Endothelial cell of umbilical vein (primary cell): ENCODE measurements at regions of chr1 and their contacts with region 1.

Region 1: DNA sequence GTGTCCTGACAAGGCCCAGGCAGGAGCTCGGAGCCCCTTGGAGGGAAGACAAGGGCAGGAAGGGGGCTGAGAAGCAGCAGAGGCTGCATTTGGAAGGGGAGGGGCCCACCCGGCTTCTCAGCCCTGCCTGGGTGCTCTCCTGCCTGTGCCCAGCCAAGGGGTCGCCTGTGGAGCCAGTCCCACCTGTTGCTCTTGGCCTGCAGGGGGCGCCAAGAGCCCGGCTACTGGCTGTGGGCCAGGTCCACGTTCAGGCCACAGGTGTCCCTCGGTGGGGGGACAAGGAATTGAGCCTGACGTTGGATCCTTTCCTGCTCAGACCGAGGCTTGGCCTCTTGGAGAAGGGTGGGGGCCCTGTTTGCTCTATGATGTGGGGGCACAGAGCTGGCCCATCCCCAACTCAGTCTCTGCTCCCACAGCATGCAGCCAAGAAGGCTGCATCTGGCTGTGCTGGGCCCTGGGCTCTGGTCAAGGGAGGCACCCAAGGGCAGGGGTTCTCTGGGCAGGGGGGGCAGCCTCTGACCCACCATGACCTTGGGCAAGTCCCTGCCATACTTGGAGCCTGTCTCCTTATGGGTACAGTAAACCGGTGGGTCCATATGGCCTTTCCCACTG is 10.9 kb downstream of the WNT4 start:
- DNase-seq: peak; percentile 37
- H3K4me3 ChIP-seq: no peak overlapping the region
- H3K27ac ChIP-seq: no peak overlapping the region
- H3K4me1 ChIP-seq: peaks cover 13% of the 10 kb centered on the region
- H3K27me3 ChIP-seq: no peaks in the 10 kb centered on the region
- CTCF ChIP-seq: peak; percentile 87 to 94
- POLR2A ChIP-seq: no peak

Region 2: DNA sequence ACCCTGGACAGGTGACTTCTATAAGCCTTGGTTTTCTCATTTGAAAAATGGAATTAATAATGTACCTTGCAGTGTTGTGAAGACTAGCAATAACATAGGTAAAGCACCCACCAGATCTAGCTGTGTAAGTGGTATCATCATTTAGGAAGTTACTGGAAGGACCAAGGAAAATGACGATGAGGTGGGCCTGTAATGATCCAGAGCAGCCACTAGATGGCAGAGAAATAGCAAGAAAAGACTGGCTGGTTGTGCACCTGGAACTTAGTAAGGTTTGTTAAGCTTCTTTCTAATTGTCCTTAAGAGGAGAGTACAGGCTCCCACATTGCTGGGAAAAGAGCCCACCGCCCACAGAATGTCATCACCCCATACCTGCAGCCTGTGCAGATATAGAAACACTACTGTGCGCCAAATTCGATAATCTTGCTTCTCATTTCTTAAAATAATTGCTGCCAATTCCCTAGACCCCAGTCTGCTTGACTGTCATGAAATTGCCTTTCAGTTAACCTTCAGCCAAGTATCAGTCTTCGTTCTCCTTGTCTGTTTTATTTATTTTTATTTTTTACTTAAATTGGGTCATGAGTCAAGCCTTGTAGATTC is 26.3 kb before region 1 on chr1:
- CTCF ChIA-PET with region 1: interaction called, 10 read pairs
- POLR2A ChIA-PET with region 1: no interaction called
- dilution Hi-C with region 1: no loop called
- intact Hi-C with region 1: loop called (anchors 1 kb)
- DNase-seq: peak; percentile 62
- H3K4me3 ChIP-seq: no peak overlapping the region
- H3K27ac ChIP-seq: no peak overlapping the region
- H3K4me1 ChIP-seq: peaks cover 14% of the 10 kb centered on the region
- H3K27me3 ChIP-seq: no peaks in the 10 kb centered on the region
- CTCF ChIP-seq: peak; percentile 66 to 76
- POLR2A ChIP-seq: no peak

Region 3: GRCh38 chr1:22114083-22115012 is 17.6 kb before region 1 on chr1:
- CTCF ChIA-PET with region 1: interaction called, 22 read pairs
- POLR2A ChIA-PET with region 1: no interaction called
- dilution Hi-C with region 1: no loop called
- intact Hi-C with region 1: no loop called
- DNase-seq: peak; percentile 93
- H3K4me3 ChIP-seq: no peak overlapping the region
- H3K27ac ChIP-seq: peak overlapping the region; percentile 59
- H3K4me1 ChIP-seq: peaks cover 40% of the 10 kb centered on the region
- H3K27me3 ChIP-seq: no peaks in the 10 kb centered on the region
- CTCF ChIP-seq: no peak
- POLR2A ChIP-seq: peak; percentile 48

Region 4: DNA sequence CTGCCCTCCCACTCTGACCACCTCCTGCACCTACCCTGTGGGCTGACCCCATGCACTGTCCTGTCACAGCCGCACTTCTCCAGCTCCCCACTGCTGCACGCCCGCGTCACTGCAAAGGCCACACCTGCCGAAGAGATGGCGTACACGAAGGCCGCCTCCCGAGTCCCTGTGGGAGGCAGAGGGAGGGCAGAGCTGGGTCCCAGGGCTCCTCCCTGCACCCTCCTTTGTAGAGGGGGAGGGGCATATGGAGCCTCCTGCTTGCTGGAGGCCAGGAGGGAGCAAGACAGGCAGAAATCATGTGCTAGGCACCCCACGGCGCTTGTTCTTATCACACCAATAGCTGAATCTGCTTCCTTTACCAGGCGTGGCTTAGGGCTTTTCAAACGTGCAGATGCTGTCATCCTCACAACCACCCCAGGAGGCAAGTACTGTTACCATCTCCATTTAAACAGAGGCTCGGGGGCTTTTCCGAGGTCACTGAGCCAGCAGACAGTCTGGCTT is 10.5 kb before region 1 on chr1:
- CTCF ChIA-PET with region 1: interaction called, 24 read pairs
- POLR2A ChIA-PET with region 1: no interaction called
- dilution Hi-C with region 1: no loop called
- intact Hi-C with region 1: no loop called
- DNase-seq: no peak
- H3K4me3 ChIP-seq: no peak overlapping the region
- H3K27ac ChIP-seq: no peak overlapping the region
- H3K4me1 ChIP-seq: no peaks in the 10 kb centered on the region
- H3K27me3 ChIP-seq: no peaks in the 10 kb centered on the region
- CTCF ChIP-seq: no peak
- POLR2A ChIP-seq: no peak

Region 5: GRCh38 chr1:22143065-22144036 is 11.4 kb after region 1 on chr1 and contains the start of gene WNT4:
- CTCF ChIA-PET with region 1: interaction called, 54 read pairs
- POLR2A ChIA-PET with region 1: no interaction called
- dilution Hi-C with region 1: no loop called
- intact Hi-C with region 1: no loop called
- DNase-seq: no peak
- H3K4me3 ChIP-seq: peak within 1 kb of the TSS in 1 of 3 experiments; percentile 12
- H3K27ac ChIP-seq: no peak within 1 kb of the TSS
- H3K4me1 ChIP-seq: peaks cover 4% of the 10 kb centered on the region
- H3K27me3 ChIP-seq: peaks cover 28 to 44% of the 10 kb centered on the region in 2 experiments
- CTCF ChIP-seq: peak in 1 of 2 donors; percentile 15
- POLR2A ChIP-seq: no peak
- total RNA-seq, gene WNT4: not detected in 2 replicates

Region 6: DNA sequence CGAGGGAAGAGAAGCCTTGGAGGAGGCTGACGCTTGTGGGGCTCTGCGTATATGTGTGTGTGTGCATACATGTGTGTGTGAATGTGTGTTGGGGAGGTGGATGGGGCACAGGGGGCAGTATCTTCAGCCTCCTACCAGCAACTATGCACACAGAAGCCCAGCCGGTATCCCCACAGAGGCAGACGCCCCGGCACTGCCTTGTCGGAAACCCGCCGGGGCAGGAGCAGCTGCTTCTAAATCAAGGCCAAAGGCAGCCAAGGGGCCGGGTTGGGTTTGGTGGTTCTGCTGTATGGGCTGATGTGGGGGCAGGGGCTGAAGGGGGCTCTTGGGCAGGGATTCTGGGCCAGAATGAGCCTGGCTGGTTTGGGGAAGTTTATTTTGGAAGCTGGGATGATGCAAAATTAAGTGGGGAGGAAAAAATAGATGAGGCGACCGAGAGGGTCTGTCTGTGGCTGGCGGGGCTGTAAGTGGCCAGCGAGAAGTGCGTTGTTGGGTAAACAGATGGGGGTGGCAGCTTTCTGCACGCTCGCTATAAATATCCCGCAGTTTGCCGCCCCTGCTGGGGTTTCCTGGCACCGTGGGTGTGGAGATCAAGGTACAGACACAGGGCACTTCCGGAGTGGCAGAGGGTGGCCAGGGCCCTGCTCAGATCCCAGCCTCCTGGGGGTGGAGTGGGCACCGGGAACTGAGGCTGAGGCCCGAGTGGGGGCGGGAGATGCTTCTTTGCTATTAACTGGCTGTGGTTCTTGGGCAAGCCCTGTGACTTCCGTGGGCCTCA is 21.9 kb after region 1 on chr1:
- CTCF ChIA-PET with region 1: no interaction called
- POLR2A ChIA-PET with region 1: no interaction called
- dilution Hi-C with region 1: no loop called
- intact Hi-C with region 1: no loop called
- DNase-seq: no peak
- H3K4me3 ChIP-seq: no peak overlapping the region
- H3K27ac ChIP-seq: no peak overlapping the region
- H3K4me1 ChIP-seq: no peaks in the 10 kb centered on the region
- H3K27me3 ChIP-seq: peaks cover 0 to 7% of the 10 kb centered on the region in 2 experiments
- CTCF ChIP-seq: no peak
- POLR2A ChIP-seq: no peak

Region 7: GRCh38 chr1:22275721-22276395 is 143.9 kb after region 1 on chr1:
- CTCF ChIA-PET with region 1: interaction called, 15 read pairs
- POLR2A ChIA-PET with region 1: no interaction called
- dilution Hi-C with region 1: no loop called
- intact Hi-C with region 1: loop called (anchors 2 kb)
- DNase-seq: peak; percentile 69
- H3K4me3 ChIP-seq: no peak overlapping the region
- H3K27ac ChIP-seq: no peak overlapping the region
- H3K4me1 ChIP-seq: peaks cover 22% of the 10 kb centered on the region
- H3K27me3 ChIP-seq: peaks cover 0 to 5% of the 10 kb centered on the region in 2 experiments
- CTCF ChIP-seq: peak; percentile 75 to 97
- POLR2A ChIP-seq: no peak